HEK293 (cell line): ENCODE measurements at regions of chr1 and their contacts with region 1.

Region 1: GRCh38 chr1:165697881-165698760 is at the start of gene ALDH9A1:
- H3K4me3 ChIP-seq: peak within 1 kb of the TSS; percentile 83
- H3K27ac ChIP-seq: peak within 1 kb of the TSS; percentile 94
- H3K4me1 ChIP-seq: peaks cover 5% of the 10 kb centered on the region; the same call in 1 of the 2 replicates
- CTCF ChIP-seq: peak; percentile 89

Region 2: DNA sequence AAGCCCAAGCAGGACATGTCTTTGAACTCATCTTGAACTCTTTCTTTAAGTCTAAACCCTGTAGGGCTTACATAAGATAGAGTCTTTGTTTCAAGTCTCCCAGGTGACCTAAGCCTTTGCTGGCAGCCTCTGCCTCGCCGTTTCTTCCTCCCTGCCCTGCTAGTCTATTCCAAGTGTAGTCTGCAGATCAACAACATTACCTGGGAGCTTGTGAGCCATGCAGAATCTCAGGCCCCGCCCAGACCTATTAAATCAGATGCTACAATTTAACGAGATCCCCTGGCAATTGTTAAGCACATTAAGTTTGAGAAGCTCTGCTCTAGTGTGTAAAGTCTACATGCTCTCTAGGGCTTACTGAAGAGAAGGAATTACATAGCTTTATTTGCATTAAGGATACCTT is 867.5 kb before region 1 on chr1:
- CTCF ChIA-PET with region 1: no interaction called
- POLR2A ChIA-PET with region 1: no interaction called
- H3K4me3 ChIP-seq: no peak overlapping the region
- H3K27ac ChIP-seq: no peak overlapping the region
- H3K4me1 ChIP-seq: no peaks in the 10 kb centered on the region
- CTCF ChIP-seq: no peak

Region 3: DNA sequence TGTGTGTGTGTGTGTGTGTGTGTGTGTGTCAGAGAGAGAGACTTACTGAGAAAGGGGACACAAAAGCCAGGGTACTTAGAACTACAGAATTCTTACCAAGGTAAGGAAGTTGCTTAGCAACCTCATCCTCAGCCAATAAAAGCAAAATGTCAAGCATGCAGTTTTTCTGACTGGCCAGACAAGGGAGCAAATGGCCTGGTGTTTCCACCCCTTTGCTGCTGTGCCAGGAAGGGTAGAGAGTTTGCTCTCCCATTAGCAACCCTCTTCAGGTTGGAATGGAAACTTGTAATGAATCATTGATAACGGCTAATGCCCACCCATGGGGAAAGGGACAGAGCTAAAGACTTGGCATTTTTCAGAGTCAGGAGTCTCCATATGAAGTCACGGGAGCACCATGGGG is 263.8 kb before region 1 on chr1:
- CTCF ChIA-PET with region 1: no interaction called
- POLR2A ChIA-PET with region 1: no interaction called
- H3K4me3 ChIP-seq: no peak overlapping the region
- H3K27ac ChIP-seq: no peak overlapping the region
- H3K4me1 ChIP-seq: no peaks in the 10 kb centered on the region
- CTCF ChIP-seq: no peak

Region 4: DNA sequence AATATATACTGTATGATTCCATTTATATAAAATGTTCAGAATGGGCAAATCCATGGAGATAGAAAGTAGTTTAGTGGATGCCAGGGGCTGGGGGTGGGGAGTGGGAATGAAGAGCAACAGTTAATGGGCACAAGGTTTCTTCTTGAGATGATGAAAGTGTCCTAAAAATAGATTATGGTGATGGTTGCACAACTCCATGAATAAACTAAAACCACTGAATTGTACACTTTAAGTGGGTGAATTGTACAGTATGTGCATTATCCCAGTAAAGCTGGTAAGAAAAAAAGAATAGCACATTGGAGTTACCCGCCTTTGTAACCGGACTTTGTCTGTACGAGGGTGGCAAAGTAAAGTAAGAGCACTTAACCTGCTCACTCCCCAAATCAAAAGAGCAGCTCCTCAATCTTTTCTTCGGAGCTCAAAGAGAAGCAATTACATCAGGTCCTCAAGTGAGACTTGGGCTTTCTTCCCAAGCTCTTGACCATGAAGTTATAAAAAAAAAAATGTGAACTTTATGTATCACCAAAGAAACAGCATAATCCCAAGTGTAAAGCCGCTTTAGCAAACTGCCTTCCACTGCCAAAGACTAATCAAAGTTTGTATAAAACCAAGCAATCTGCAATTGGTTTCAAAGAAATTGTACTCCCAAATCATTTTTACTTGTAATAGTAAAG is 31.8 kb before region 1 on chr1:
- CTCF ChIA-PET with region 1: interaction called, 3 read pairs
- POLR2A ChIA-PET with region 1: interaction called, 11 read pairs
- H3K4me3 ChIP-seq: no peak overlapping the region
- H3K27ac ChIP-seq: no peak overlapping the region
- H3K4me1 ChIP-seq: no peaks in the 10 kb centered on the region
- CTCF ChIP-seq: no peak

Region 5: DNA sequence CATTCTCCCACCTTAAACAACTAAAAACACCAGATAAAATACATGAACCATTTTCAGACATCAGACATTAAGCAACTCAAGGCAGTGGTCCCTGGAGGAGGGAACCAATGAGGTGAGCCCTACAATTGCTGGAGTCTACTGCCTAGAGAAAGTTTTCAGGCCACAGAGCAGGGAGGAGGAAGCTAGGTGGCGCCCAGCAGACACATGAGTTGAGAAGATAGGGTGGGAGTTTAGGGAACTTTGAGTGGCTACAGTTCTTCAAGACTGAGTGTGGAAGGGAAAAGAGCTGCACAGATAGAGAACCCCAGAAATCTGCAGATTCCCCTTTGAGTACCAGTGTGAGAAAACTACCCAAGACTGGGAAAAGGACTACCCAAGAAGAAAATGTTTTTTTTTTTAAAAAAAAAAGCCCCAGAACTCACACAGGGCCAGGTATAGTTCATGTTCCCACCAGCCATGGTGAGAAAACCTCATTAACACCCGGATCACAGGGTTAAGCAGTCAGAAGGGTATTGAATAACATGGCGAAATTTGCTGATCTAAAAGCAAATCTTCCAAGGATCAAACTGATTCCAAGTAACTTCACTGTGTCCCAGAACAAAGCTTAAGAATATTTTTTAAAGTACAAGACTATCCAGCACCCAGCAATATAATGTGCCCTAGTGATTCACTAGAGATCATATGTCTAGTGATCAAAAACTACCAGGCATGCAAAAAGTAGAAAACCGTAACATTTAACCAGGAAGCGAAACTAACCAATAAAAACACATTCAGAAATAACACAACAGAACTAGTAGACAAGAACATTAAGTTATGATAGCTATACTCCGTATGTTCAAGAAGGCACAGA is 11.8 kb before region 1 on chr1:
- CTCF ChIA-PET with region 1: interaction called, 11 read pairs
- POLR2A ChIA-PET with region 1: interaction called, 4 read pairs
- H3K4me3 ChIP-seq: no peak overlapping the region
- H3K27ac ChIP-seq: no peak overlapping the region
- H3K4me1 ChIP-seq: no peaks in the 10 kb centered on the region
- CTCF ChIP-seq: 0 out of 2 replicates have a peak, but pooled peaks have one; percentile 20

Region 6: DNA sequence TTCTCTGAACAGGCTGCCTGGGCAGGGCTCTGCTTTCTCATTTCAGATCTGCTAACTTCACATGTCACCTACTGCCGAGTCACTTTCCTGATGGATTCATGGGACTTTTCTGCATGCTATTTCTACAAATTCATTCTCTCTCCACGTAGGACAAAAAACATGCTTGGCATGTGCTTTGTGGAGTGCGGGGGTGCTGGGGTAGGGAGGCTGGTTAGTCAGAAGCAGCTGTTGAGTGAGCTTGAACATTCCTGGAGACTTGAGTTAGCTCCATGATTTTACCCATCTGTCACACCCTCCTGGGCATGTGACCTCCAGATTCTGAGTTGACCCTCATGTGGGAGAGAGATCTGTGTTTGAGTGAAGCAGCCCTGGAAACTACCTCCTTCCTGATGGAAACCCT is 200.7 kb after region 1 on chr1:
- CTCF ChIA-PET with region 1: no interaction called
- POLR2A ChIA-PET with region 1: no interaction called
- H3K4me3 ChIP-seq: no peak overlapping the region
- H3K27ac ChIP-seq: no peak overlapping the region
- H3K4me1 ChIP-seq: no peaks in the 10 kb centered on the region
- CTCF ChIP-seq: no peak